Posterior cingulate gyrus (tissue), 11 donors: ENCODE measurements at regions of chrX and their contacts with region 1.

Region 1: GRCh38 chrX:136953867-136954787 is 73.6 kb upstream of the RBMX start:
- DNase-seq: peak; percentile 22 to 93 (median 60)

Region 2: DNA sequence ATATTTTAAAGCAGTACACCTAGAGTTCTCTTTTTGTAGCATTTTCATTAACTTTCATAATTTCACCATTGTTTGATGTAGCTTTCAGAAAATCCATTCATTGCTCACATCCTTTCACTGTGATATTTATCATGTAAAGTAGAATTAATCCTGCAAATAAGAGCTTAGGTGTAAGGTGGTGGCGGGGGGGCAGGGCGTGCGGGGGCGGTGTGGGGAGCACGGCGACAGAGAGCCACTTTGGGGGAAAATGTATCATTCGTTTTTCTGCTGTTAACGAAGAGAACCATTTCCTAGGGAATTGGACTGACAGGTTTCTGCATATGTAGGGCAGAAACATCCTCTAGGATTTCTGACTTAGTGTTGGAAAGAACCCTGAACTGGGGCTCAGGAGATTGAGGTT is 549.0 kb before region 1 on chrX:
- intact Hi-C with region 1: no loop called
- DNase-seq: no peak

Region 3: DNA sequence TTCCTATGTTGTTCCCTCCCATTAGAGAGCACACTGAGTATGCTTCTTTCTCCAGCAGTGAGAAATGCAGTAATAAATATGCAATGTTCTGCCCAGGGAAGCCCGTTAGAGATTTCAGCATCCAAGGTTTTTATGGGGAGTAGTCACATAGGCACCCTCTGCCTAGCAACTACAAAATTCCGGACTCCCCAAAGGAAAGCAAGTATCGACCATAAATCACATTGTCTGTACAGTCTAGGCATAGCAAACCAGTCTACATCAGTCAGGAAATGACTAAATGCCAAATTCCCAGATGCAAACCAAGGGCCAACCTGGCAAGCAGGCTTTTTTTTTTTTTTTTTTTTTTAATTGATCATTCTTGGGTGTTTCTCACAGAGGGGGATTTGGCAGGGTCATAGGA is 44.9 kb after region 1 on chrX:
- intact Hi-C with region 1: no loop called
- DNase-seq: no peak

Region 4: GRCh38 chrX:137051978-137052642 is 98.0 kb after region 1 on chrX:
- intact Hi-C with region 1: loop called (anchors 5 kb)
- DNase-seq: peak in 9 of 10 donors; percentile 12 to 92 (median 58)

Region 5: GRCh38 chrX:137194164-137194563 is 240.0 kb after region 1 on chrX:
- intact Hi-C with region 1: loop called (anchors 10 kb)
- DNase-seq: peak in 4 of 10 donors; percentile 5 to 73 (median 13)